Activated B cell treated with CpG ODN at 0.5 μM for 24 hours (primary cell): ENCODE measurements at regions of chr3 and their contacts with region 1.

Region 1: DNA sequence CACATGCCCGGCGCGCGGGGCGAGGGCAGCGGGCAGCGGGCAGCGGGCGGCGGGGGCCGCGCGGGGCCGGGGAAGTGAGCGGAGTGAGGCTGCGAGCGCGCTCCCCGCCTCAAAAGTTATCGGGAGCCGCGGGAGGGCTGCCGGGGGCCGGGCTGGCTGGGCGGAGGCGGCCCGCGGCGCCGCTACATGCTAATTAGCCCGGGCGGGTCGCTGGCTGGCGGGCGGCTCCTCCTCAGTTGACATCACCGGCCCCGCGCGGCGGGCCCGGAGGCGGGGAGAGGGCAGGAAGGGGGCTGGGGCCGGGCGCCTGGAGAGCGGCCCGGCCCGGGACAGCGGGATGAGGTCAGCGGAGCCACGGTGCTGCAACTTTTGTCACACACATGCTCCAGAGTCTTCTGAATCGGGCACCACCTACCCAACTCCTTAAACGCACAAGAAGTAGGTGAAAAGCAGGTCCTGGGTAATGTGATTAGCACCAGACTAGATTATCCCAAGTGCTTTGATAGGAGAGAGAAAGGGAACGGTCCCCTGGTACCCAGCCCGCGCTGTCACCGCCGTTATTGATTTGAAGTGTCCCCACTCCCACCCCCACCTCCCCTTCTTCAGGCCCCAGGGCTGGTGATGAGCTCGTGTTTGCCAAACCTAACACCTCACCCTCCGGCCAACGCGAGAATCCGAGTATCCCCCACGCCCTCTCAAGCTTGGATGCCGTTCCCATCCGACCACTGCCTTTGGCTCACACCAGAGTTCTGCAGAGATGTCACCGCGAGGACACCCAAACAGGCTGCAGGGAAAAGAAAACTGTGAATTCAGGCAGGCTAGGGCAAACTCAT is at the start of gene HEG1:
- DNase-seq: peak; percentile 66
- ATAC-seq: peak; percentile 78
- H3K4me3 Mint-ChIP-seq: peak within 1 kb of the TSS; percentile 86
- H3K27ac Mint-ChIP-seq: peak within 1 kb of the TSS; percentile 68
- H3K4me1 Mint-ChIP-seq: peaks cover 39% of the 10 kb centered on the region
- H3K27me3 Mint-ChIP-seq: peaks cover 6% of the 10 kb centered on the region
- CTCF ChIP-seq: no peak
- total RNA-seq, gene HEG1: 6.1 and 7.2 TPM in 2 replicates

Region 2: DNA sequence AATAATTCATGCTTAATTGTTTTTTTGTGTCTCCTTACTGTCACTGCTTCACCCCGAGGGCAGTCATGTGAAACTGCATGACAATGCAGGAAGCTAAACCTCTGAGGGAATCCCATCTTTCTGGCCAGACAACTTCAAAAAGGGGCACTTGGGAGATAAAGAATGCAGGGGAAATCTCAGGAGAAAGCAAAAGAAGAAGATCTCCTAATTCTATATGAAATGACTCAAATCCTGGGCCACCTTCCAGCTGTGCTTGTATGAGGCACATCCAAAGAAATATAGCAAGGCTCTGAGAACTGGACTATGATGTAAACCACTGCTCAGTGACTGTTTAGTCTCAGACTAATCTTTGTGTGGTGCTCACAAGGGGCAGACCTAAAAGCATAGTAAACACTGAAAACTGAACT is 348.5 kb before region 1 on chr3:
- CTCF ChIA-PET with region 1: no interaction called
- POLR2A ChIA-PET with region 1: no interaction called
- intact Hi-C with region 1: no loop called
- DNase-seq: no peak
- ATAC-seq: no peak
- H3K4me3 Mint-ChIP-seq: no peak overlapping the region
- H3K27ac Mint-ChIP-seq: no peak overlapping the region
- H3K4me1 Mint-ChIP-seq: no peaks in the 10 kb centered on the region
- H3K27me3 Mint-ChIP-seq: peaks cover 42% of the 10 kb centered on the region
- CTCF ChIP-seq: no peak

Region 3: GRCh38 chr3:125072301-125072700 is 16.2 kb after region 1 on chr3:
- CTCF ChIA-PET with region 1: no interaction called
- POLR2A ChIA-PET with region 1: no interaction called
- intact Hi-C with region 1: loop called (anchors 1 kb)
- DNase-seq: no peak
- ATAC-seq: no peak
- H3K4me3 Mint-ChIP-seq: no peak overlapping the region
- H3K27ac Mint-ChIP-seq: no peak overlapping the region
- H3K4me1 Mint-ChIP-seq: peaks cover 21% of the 10 kb centered on the region
- H3K27me3 Mint-ChIP-seq: no peaks in the 10 kb centered on the region
- CTCF ChIP-seq: no peak

Region 4: DNA sequence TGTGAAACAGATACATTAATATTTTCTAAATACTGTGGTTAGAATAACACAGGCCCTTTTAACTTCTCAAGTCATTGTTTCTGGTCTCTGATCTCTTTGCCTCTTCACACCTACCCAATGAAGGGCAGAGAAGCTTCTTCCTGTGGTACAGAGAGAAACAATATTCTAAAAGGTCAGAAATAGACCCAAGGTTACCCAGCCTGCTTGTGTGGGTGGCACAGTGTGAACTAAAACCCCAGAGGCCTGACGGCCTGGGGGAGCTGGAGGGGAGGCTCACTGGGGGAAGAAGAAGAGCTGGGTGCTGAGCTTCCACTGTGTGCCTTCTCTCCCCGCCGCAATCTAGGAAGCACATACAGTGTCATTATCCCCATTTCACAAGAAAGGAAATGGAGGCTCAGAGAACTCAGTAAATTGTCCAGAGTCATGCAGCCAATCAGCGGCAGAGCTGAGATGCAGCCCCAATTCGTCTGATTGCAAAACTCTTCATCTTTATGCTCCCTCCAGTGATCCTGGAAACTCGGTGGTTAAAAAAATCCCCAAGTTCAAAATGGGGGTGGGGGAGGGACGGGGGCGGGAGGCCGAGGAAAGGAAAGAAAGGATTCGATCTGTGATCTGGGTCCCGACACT is 63.7 kb after region 1 on chr3:
- CTCF ChIA-PET with region 1: no interaction called
- POLR2A ChIA-PET with region 1: no interaction called
- intact Hi-C with region 1: loop called (anchors 1 kb)
- DNase-seq: no peak
- ATAC-seq: peak; percentile 84
- H3K4me3 Mint-ChIP-seq: peak overlapping the region; percentile 74
- H3K27ac Mint-ChIP-seq: peak overlapping the region; percentile 62
- H3K4me1 Mint-ChIP-seq: peaks cover 32% of the 10 kb centered on the region
- H3K27me3 Mint-ChIP-seq: no peaks in the 10 kb centered on the region
- CTCF ChIP-seq: no peak

Region 5: GRCh38 chr3:125212509-125213244 is 156.5 kb after region 1 on chr3 and contains the start of gene SLC12A8:
- CTCF ChIA-PET with region 1: no interaction called
- POLR2A ChIA-PET with region 1: no interaction called
- intact Hi-C with region 1: loop called (anchors 5 kb)
- DNase-seq: no peak
- ATAC-seq: no peak
- H3K4me3 Mint-ChIP-seq: peak within 1 kb of the TSS; percentile 57
- H3K27ac Mint-ChIP-seq: no peak within 1 kb of the TSS
- H3K4me1 Mint-ChIP-seq: peaks cover 9% of the 10 kb centered on the region
- H3K27me3 Mint-ChIP-seq: peaks cover 33% of the 10 kb centered on the region
- CTCF ChIP-seq: no peak
- total RNA-seq, gene SLC12A8: 0.58 and 0.81 TPM in 2 replicates

Region 6: GRCh38 chr3:125594581-125595011 is 538.5 kb after region 1 on chr3:
- CTCF ChIA-PET with region 1: no interaction called
- POLR2A ChIA-PET with region 1: no interaction called
- intact Hi-C with region 1: loop called (anchors 5 kb)
- DNase-seq: no peak
- ATAC-seq: no peak
- H3K4me3 Mint-ChIP-seq: peak overlapping the region; percentile 97
- H3K27ac Mint-ChIP-seq: peak overlapping the region; percentile 92
- H3K4me1 Mint-ChIP-seq: peaks cover 44% of the 10 kb centered on the region
- H3K27me3 Mint-ChIP-seq: no peaks in the 10 kb centered on the region
- CTCF ChIP-seq: no peak